Esophagus muscularis mucosa (tissue), 4 donors: ENCODE measurements at regions of chr1 and their contacts with region 1.

Region 1: DNA sequence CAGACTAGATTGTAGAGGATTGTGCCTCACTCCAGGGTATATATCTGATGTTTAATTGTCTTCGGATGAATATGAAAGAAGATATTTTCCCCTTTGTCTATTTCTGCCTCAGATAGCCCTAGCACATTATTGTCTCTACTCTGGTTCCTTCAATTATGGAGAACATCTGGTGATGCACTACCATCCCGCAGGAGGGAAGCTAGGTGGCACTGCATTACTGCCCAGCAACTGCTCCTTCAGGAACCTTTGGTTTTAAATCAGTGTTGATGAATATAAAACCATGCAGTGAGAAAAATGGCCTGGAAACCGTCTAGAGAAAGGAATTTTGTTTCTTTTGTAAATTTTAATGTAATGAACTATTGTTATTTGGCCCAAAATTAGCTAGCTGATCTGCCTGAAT is 68.5 kb downstream of the GPR88 start:
- DNase-seq: no peak
- H3K4me3 ChIP-seq: no peak overlapping the region
- H3K27ac ChIP-seq: no peak overlapping the region
- H3K4me1 ChIP-seq: no peaks in the 10 kb centered on the region
- H3K27me3 ChIP-seq: no peaks in the 10 kb centered on the region
- CTCF ChIP-seq: peak; percentile 57 to 73 (median 60)
- EP300 ChIP-seq: no peak
- POLR2A ChIP-seq: no peak

Region 2: DNA sequence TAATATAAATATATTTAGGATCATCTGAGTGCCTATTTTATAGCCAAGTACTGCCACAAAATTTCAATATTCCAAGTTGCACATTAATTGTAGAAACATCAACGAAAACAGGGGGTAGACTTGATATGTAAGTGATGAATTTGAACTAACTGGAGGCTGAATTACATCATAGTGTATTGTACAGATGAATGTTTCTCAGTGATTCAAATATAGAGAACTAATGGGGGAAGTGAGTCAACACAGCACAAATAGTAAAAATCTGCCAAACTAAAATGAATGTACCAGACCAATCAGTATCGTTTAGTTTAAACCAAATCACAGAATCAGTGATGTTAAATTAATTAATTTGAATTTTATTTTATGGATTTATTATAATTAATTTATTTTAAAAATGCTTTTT is 297.7 kb before region 1 on chr1:
- intact Hi-C with region 1: no loop called
- DNase-seq: no peak
- H3K4me3 ChIP-seq: no peak overlapping the region
- H3K27ac ChIP-seq: no peak overlapping the region
- H3K4me1 ChIP-seq: no peaks in the 10 kb centered on the region
- H3K27me3 ChIP-seq: no peaks in the 10 kb centered on the region
- CTCF ChIP-seq: no peak
- EP300 ChIP-seq: no peak
- POLR2A ChIP-seq: no peak

Region 3: DNA sequence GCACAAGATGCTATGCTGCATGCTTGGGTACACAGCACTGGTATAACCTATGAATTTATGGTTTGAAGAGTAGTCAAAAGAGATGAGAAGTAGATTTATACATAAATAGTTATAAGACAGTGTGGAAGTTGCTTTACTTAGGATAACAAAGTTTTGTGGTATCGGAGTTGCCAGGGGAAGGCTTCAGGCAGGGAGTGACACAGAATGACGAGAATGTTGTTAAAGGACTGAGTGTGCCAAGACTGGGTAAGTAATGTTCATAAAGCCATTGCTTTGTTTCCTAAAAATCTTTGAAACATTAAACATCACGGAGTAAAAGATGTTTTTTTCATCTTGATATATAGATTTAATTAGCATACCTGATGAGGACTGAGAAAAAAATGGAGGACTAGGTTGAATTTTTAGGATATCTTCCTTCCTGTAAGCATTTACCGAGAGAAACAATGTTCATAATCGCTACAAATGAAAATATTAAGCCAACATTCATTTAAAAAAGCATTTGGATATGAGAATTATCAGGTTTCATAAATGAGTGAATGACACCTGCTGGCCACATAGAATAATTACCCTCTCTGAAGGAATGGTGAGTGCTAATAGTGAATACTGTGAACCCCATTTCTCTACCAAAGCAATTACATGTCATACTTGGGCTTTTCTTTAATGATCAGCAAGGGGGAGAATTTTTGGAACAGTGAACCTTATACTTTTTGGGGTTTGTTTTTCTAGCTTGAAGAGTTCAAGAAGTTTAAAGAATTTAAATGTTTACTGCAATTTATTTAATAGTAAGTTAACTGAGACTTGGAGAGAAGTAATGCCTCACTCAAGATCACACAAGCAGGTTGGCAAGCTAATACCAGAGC is 259.8 kb after region 1 on chr1:
- intact Hi-C with region 1: loop called (anchors 2 kb)
- DNase-seq: no peak
- H3K4me3 ChIP-seq: no peak overlapping the region
- H3K27ac ChIP-seq: no peak overlapping the region
- H3K4me1 ChIP-seq: peaks cover 0 to 34% (median 27%) of the 10 kb centered on the region in 4 donors
- H3K27me3 ChIP-seq: no peaks in the 10 kb centered on the region
- CTCF ChIP-seq: peak; percentile 42 to 59 (median 49)
- EP300 ChIP-seq: no peak
- POLR2A ChIP-seq: no peak